ENCODE measurements at regions of chr5 and their contacts with region 1.

Region 1: DNA sequence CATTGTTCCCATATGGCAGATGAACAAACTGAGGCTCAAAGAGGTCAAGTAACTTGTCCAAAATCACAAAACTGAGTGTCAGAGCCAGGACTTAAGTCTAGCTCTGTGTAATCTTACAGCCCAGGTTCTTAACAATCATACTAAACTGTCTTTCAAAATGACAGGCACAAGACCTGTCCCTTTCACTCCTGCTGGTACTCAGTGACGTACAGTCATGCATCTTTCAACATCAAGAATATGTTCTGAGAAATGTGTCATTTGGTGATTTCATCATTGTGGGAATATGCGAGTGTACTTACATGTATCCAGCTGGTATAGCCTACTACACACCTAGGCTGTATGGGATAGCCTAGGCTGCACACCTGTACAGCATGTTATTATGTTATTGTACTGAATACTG is 646.8 kb upstream of the WWC1 start:
- DNase-seq: peak in 1 of 2 experiments; percentile 52
- H3K4me3 ChIP-seq: no peak overlapping the region
- H3K27ac ChIP-seq: no peak overlapping the region
- H3K4me1 ChIP-seq: peaks cover 11% of the 10 kb centered on the region
- H3K27me3 ChIP-seq: no peaks in the 10 kb centered on the region
- CTCF ChIP-seq: no peak

Region 2: DNA sequence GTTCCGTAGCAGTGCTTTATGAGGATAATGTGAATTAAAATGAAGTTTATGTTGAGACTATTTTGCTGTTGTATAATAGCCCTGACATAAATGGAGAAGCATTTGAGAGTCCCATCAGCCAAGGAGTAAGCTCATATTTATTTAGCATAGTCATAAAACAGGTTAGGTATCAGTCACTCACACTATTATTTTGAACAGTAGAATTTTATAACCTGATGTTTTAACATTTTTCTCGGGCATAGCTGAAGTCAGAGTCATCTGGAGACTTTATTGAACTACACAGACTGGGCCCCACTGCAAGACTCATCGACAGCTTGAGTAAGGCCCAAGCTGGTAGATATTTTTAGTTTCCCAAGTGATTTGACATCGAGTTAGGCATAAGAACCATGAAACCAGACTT is 26.6 kb after region 1 on chr5:
- CTCF ChIA-PET with region 1: no interaction called
- POLR2A ChIA-PET with region 1: interaction called, 11 read pairs
- intact Hi-C with region 1: no loop called
- DNase-seq: no peak
- H3K4me3 ChIP-seq: no peak overlapping the region
- H3K27ac ChIP-seq: no peak overlapping the region
- H3K4me1 ChIP-seq: no peaks in the 10 kb centered on the region
- H3K27me3 ChIP-seq: no peaks in the 10 kb centered on the region
- CTCF ChIP-seq: no peak

Measured in PC-9 (cell line).